IMR-90 (cell line): ENCODE measurements at regions of chr6 and their contacts with region 1.

Region 1: GRCh38 chr6:45421709-45422502 is 44.2 kb upstream of the SUPT3H start:
- DNase-seq: peak; percentile 67
- ATAC-seq: peak; percentile 81
- H3K4me3 ChIP-seq: peak overlapping the region; percentile 99
- H3K27ac ChIP-seq: peak overlapping the region; percentile 95
- H3K4me1 ChIP-seq: peaks cover 11% of the 10 kb centered on the region
- H3K27me3 ChIP-seq: no peaks in the 10 kb centered on the region
- CTCF ChIP-seq: peak; percentile 38
- POLR2A ChIP-seq: no peak
- RAD21 ChIP-seq: peak; percentile 42

Region 2: GRCh38 chr6:44475779-44476434 is 946.0 kb before region 1 on chr6:
- CTCF ChIA-PET with region 1: no interaction called
- POLR2A ChIA-PET with region 1: no interaction called
- dilution Hi-C with region 1: no loop called
- in situ Hi-C with region 1: loop called (anchors 10 kb)
- intact Hi-C with region 1: loop called (anchors 2 kb)
- DNase-seq: peak; percentile 65
- ATAC-seq: peak; percentile 98
- H3K4me3 ChIP-seq: no peak overlapping the region
- H3K27ac ChIP-seq: no peak overlapping the region
- H3K4me1 ChIP-seq: peaks cover 2% of the 10 kb centered on the region; the same call in 1 of the 2 replicates
- H3K27me3 ChIP-seq: peaks cover 40% of the 10 kb centered on the region
- CTCF ChIP-seq: peak; percentile 93
- POLR2A ChIP-seq: peak; percentile 57; the same call in 1 of the 2 replicates
- RAD21 ChIP-seq: peak; percentile 97

Region 3: DNA sequence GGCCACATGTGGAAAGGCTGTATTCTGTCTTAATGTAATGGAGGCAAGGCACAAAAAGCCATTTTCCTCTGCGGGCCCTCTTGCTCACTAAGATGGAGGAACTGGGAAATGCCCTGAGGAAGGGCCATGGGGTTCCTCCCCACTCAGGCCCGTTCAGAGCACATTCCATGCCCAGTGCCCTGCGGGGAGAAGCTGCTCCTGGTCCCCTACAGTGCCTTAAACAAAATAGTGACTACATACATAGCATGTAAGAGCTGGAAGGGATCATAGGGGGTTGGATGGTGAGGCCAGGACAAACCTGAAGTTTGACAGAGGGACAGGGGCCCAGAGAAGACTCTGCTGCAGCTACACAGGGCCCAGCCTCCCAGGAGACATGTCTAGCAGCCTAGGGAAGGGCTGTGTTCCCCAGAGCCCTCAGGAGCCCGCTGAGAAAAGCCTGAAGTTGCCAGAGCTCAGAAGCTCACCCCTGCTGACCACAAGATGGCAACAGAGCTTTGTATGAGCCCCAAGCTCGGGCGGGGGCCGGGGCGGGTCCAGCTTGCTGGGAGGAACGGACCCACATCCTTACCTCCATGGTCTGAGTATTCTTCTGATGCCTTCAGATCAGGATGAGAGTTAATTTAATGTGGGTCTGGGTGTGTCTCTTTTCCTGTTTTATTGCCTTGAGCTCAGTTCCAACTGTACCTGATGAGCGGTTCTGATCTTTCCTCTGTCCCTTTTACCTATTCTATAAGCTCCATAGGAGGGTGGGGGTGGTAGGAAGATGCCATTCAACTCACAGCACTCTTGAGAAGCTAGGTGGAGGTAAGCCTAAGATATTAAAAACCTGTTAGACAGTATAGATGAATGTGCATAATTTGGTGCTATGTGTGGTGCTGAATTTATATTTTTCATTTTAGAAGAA is 791.5 kb before region 1 on chr6:
- CTCF ChIA-PET with region 1: interaction called, 3 read pairs
- POLR2A ChIA-PET with region 1: no interaction called
- dilution Hi-C with region 1: no loop called
- in situ Hi-C with region 1: no loop called
- intact Hi-C with region 1: loop called (anchors 2 kb)
- DNase-seq: peak; percentile 51
- ATAC-seq: peak; percentile 95
- H3K4me3 ChIP-seq: no peak overlapping the region
- H3K27ac ChIP-seq: no peak overlapping the region
- H3K4me1 ChIP-seq: no peaks in the 10 kb centered on the region
- H3K27me3 ChIP-seq: peaks cover 19% of the 10 kb centered on the region
- CTCF ChIP-seq: peak; percentile 68
- POLR2A ChIP-seq: no peak
- RAD21 ChIP-seq: peak; percentile 74

Region 4: DNA sequence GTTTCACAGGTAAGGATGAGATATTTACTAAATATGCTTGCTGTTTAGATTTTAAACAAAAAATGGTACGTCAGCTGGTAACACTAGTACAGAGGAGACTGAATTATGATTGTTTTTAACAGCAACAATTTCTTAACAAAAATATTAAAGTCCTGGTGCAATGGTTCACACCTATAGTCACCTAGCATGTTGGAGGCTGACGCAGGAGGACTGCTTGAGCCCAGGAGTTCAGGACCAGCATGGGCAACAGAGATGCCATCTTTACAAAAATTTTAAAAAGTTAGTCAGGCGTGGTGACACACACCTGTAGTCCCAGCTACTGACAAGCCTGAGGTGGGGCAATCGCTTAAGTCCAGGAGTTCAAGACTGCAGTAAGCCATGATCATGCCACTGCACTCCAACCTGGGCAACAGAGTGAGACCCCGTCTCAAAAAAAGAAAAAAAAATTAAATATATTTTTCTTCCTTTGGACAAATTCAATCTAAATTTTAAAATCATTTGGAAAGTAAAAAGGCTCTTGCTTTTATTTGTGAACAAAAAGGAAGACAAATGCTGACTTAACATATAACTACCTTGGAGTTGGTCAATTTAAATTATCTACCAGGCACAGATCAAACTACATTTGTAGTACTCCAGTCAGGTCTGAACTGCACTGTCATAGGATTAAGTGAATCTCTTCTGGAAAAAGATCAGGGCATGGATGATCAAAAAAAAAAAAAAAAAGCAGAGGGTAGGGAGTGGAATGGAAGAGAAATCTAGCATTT is 132.0 kb before region 1 on chr6:
- CTCF ChIA-PET with region 1: no interaction called
- POLR2A ChIA-PET with region 1: no interaction called
- dilution Hi-C with region 1: no loop called
- in situ Hi-C with region 1: no loop called
- intact Hi-C with region 1: no loop called
- DNase-seq: no peak
- ATAC-seq: no peak
- H3K4me3 ChIP-seq: no peak overlapping the region
- H3K27ac ChIP-seq: no peak overlapping the region
- H3K4me1 ChIP-seq: no peaks in the 10 kb centered on the region
- H3K27me3 ChIP-seq: no peaks in the 10 kb centered on the region
- CTCF ChIP-seq: no peak
- POLR2A ChIP-seq: no peak
- RAD21 ChIP-seq: no peak

Region 5: DNA sequence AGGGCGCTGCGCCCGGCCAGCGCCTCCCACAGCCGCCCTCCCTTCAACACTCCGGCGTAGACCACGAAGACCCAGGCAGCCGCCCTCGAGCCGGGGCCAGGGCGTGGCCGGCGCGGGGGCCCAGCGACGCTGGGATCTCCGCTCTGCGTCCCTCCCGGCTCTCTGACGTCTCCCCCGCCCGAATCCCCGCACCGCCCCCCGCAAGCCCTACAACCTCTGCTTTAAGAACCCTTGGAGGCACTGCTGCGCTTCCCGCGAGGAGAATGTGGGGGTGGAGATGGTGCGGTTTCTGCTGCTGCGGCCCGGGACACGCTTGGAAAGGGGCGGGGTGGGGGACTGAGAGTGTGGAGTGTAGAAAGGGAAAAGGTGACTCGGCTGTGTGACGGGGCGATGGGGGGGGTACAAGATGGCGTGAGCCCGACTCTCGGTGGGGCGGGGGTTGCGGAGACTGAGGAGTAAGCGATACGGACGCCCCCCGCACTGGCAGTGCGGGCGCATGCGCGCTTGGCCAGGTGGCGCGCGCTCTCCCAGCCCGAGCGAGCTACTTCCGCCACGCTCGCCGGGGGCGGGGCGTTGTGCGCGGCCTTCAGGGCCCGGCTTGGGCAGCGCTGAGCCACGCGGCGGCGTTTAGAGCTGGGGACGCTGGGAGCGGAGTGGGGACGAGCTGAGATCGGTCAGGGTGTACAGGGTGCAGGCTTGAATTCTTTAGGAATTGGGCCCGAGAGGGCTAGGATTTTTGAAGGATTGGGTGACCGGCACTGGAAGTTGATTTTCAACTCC is 44.2 kb before region 1 on chr6 and contains the start of gene SUPT3H:
- CTCF ChIA-PET with region 1: interaction called, 3 read pairs
- POLR2A ChIA-PET with region 1: no interaction called
- dilution Hi-C with region 1: no loop called
- in situ Hi-C with region 1: no loop called
- intact Hi-C with region 1: loop called (anchors 1 kb)
- DNase-seq: peak; percentile 93
- ATAC-seq: peak; percentile 94
- H3K4me3 ChIP-seq: peak within 1 kb of the TSS; percentile 66
- H3K27ac ChIP-seq: peak within 1 kb of the TSS; percentile 95
- H3K4me1 ChIP-seq: no peaks in the 10 kb centered on the region
- H3K27me3 ChIP-seq: no peaks in the 10 kb centered on the region
- CTCF ChIP-seq: peak; percentile 27; the same call in 1 of the 2 replicates
- POLR2A ChIP-seq: peak; percentile 93
- RAD21 ChIP-seq: peak; percentile 41
- total RNA-seq, gene SUPT3H: 4.2 and 5.0 TPM in 2 replicates

Region 6: GRCh38 chr6:45504947-45505346 is 83.0 kb after region 1 on chr6:
- CTCF ChIA-PET with region 1: no interaction called
- POLR2A ChIA-PET with region 1: no interaction called
- dilution Hi-C with region 1: no loop called
- in situ Hi-C with region 1: no loop called
- intact Hi-C with region 1: loop called (anchors 2 kb)
- DNase-seq: peak; percentile 98
- ATAC-seq: peak; percentile 93
- H3K4me3 ChIP-seq: no peak overlapping the region
- H3K27ac ChIP-seq: peak overlapping the region; percentile 42
- H3K4me1 ChIP-seq: peaks cover 10% of the 10 kb centered on the region
- H3K27me3 ChIP-seq: no peaks in the 10 kb centered on the region
- CTCF ChIP-seq: no peak
- POLR2A ChIP-seq: no peak
- RAD21 ChIP-seq: peak; percentile 30; the same call in 1 of the 2 replicates

Region 7: GRCh38 chr6:45626087-45626891 is 204.4 kb after region 1 on chr6:
- CTCF ChIA-PET with region 1: no interaction called
- POLR2A ChIA-PET with region 1: no interaction called
- dilution Hi-C with region 1: no loop called
- in situ Hi-C with region 1: no loop called
- intact Hi-C with region 1: loop called (anchors 10 kb)
- DNase-seq: peak; percentile 84
- ATAC-seq: peak; percentile 49
- H3K4me3 ChIP-seq: no peak overlapping the region
- H3K27ac ChIP-seq: peak overlapping the region; percentile 29; the same call in 1 of the 2 replicates
- H3K4me1 ChIP-seq: peaks cover 23% of the 10 kb centered on the region
- H3K27me3 ChIP-seq: no peaks in the 10 kb centered on the region
- CTCF ChIP-seq: no peak
- POLR2A ChIP-seq: no peak
- RAD21 ChIP-seq: no peak

Region 8: GRCh38 chr6:45922728-45923351 is 500.9 kb after region 1 on chr6:
- CTCF ChIA-PET with region 1: no interaction called
- POLR2A ChIA-PET with region 1: no interaction called
- dilution Hi-C with region 1: no loop called
- in situ Hi-C with region 1: loop called (anchors 25 kb)
- intact Hi-C with region 1: loop called (anchors 1 kb)
- DNase-seq: peak; percentile 61
- ATAC-seq: peak; percentile 78
- H3K4me3 ChIP-seq: no peak overlapping the region
- H3K27ac ChIP-seq: no peak overlapping the region
- H3K4me1 ChIP-seq: peaks cover 2% of the 10 kb centered on the region; the same call in 1 of the 2 replicates
- H3K27me3 ChIP-seq: peaks cover 4% of the 10 kb centered on the region
- CTCF ChIP-seq: peak; percentile 77
- POLR2A ChIP-seq: no peak
- RAD21 ChIP-seq: peak; percentile 91